Panc1 (cell line): ENCODE measurements at regions of chr21 and their contacts with region 1.

Region 1: GRCh38 chr21:20701235-20701634 is 297.0 kb upstream of the NCAM2 start:
- DNase-seq: no peak
- ATAC-seq: no peak
- H3K4me3 ChIP-seq: no peak overlapping the region
- H3K27ac ChIP-seq: no peak overlapping the region
- H3K4me1 ChIP-seq: no peaks in the 10 kb centered on the region
- H3K27me3 ChIP-seq: no peaks in the 10 kb centered on the region
- CTCF ChIP-seq: no peak

Region 2: DNA sequence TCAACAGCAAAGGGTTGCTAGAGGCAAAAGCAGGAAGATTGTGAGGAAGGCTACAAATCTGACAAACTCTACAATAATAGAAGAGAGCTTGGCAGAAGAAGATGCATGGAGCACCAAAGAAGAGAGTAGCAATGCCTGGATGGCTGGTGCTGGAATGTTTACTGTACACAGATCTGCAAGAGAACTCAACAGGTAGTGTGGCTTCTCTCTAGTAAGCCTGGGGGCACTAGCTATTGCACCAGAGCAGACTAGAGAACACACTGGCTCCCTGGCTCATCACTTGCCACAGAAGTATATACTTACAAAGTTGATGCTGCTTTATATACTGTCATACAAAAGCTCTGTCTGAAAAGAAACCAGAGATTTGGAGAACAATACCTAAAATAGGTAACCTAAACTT is 178.0 kb before region 1 on chr21:
- CTCF ChIA-PET with region 1: no interaction called
- POLR2A ChIA-PET with region 1: no interaction called
- in situ Hi-C with region 1: no loop called
- intact Hi-C with region 1: no loop called
- DNase-seq: no peak
- ATAC-seq: no peak
- H3K4me3 ChIP-seq: no peak overlapping the region
- H3K27ac ChIP-seq: no peak overlapping the region
- H3K4me1 ChIP-seq: no peaks in the 10 kb centered on the region
- H3K27me3 ChIP-seq: no peaks in the 10 kb centered on the region
- CTCF ChIP-seq: no peak

Region 3: GRCh38 chr21:20639026-20639425 is 62.2 kb before region 1 on chr21:
- CTCF ChIA-PET with region 1: no interaction called
- POLR2A ChIA-PET with region 1: no interaction called
- in situ Hi-C with region 1: no loop called
- intact Hi-C with region 1: no loop called
- DNase-seq: no peak
- ATAC-seq: no peak
- H3K4me3 ChIP-seq: no peak overlapping the region
- H3K27ac ChIP-seq: no peak overlapping the region
- H3K4me1 ChIP-seq: no peaks in the 10 kb centered on the region
- H3K27me3 ChIP-seq: no peaks in the 10 kb centered on the region
- CTCF ChIP-seq: no peak

Region 4: DNA sequence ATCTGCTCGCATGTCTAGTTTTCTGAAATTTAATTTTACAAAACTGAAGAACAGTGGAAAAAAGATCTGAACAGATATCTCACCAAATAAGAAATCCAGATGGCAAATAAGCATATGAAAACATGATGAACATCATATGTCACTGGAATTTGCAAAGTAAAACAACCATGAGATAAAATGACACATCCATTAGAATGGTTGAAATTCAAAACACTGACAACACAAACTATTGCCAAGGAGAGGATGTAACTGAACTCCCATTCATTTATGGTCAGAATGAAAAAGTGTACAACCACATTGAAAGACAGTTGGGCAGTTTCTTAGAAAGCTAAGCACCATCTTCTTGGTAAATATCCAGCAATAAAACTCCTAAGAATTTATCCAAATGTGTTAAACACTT is 15.8 kb before region 1 on chr21:
- CTCF ChIA-PET with region 1: no interaction called
- POLR2A ChIA-PET with region 1: no interaction called
- in situ Hi-C with region 1: no loop called
- intact Hi-C with region 1: no loop called
- DNase-seq: no peak
- ATAC-seq: no peak
- H3K4me3 ChIP-seq: no peak overlapping the region
- H3K27ac ChIP-seq: no peak overlapping the region
- H3K4me1 ChIP-seq: no peaks in the 10 kb centered on the region
- H3K27me3 ChIP-seq: no peaks in the 10 kb centered on the region
- CTCF ChIP-seq: no peak

Region 5: DNA sequence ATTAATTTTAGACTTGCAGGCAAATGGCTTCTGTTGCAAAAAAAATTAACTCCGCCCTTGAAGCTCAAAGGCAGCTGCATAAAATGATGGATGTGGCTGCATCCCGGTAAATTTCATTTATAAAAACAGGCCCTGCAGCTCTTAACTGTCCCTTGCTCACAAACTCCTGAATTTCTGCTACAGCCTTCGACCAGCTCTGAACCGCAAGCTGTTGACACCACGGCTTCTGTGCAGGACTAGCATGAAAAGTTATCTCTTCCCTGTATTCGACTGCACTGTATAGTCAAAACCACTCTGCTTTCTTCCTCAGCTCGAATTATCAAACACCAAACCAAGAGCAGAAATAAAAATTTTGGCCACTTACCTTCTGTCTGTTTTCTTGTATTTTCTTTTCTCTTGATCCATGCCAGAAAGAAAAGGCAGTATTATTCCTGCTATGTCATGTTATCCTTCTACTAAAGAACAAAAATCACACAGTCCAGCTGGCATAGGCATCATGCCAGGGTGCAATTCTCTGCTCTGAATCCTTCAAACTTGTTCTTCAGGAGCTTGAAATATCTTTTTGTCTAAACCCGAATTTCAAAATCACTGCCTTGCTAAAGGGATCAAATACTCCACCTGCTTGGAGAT is 101.5 kb after region 1 on chr21:
- CTCF ChIA-PET with region 1: no interaction called
- POLR2A ChIA-PET with region 1: interaction called, 12 read pairs
- in situ Hi-C with region 1: no loop called
- intact Hi-C with region 1: no loop called
- DNase-seq: no peak
- ATAC-seq: no peak
- H3K4me3 ChIP-seq: no peak overlapping the region
- H3K27ac ChIP-seq: no peak overlapping the region
- H3K4me1 ChIP-seq: no peaks in the 10 kb centered on the region
- H3K27me3 ChIP-seq: no peaks in the 10 kb centered on the region
- CTCF ChIP-seq: no peak